ENCODE measurements at regions of chr12 and their contacts with region 1.

Region 1: DNA sequence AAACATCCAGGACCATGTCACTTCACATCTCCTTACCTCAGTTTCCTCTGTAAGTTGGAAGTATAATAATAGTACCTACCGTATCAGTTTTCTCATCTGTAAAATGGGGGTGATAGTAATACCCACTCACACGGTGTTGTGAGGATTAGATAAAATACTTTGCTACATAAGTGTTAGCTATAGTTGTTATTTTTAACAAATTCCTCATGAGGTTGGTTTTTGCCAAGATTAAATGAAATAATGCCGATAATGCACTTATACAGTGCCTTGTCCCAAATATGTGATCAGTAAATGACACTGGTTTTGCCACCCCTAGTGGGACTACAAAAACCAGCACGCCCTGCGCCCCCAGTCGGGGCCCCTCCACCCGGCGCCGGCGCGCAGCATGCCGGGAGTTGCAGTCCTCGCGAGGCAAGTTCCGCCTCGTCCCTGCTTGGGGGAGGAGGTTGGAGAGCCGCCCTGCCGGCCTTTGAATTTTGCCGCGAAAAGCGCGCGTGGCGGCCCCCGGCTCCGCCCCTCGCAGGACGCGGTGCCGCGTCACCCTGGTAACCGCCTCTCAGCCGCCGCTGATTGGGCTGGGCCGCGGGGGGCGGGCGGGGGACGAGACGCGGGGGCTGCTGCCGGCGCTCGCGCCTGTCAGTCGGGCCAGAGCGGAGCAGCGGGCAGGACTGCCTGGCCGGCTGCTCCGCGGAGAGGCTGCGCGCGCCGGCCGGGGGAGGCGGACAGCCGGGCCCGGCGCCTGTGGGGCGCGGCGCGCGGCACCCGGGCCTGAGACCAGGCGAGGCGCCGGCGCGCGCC is at the start of gene FAM222A:
- DNase-seq: peak; percentile 96 to 100 (median 98)
- H3K4me3 ChIP-seq: peak within 1 kb of the TSS; percentile 54 to 89 (median 78)
- H3K27ac ChIP-seq: peak within 1 kb of the TSS in 57 of 59 donors; percentile 41 to 97 (median 86)
- H3K27me3 ChIP-seq: peaks cover 0 to 12% (median 0%) of the 10 kb centered on the region in 45 donors
- CTCF ChIP-seq: peak in 53 of 56 donors; percentile 33 to 75 (median 57)
- total RNA-seq, gene FAM222A: 10.4 to 85.9 (median 23.1) TPM

Region 2: GRCh38 chr12:109518820-109519665 is 194.3 kb before region 1 on chr12:
- intact Hi-C with region 1: loop called (anchors 5 kb)
- DNase-seq: peak in 9 of 10 donors; percentile 52 to 93 (median 75)
- H3K4me3 ChIP-seq: no peak overlapping the region
- H3K27ac ChIP-seq: peak overlapping the region in 54 of 59 donors; percentile 2 to 85 (median 65)
- H3K27me3 ChIP-seq: no peaks in the 10 kb centered on the region
- CTCF ChIP-seq: peak; percentile 76 to 95 (median 86)

Region 3: GRCh38 chr12:109597795-109598427 is 115.5 kb before region 1 on chr12:
- intact Hi-C with region 1: loop called (anchors 2 kb)
- DNase-seq: peak; percentile 90 to 92 (median 91)
- H3K4me3 ChIP-seq: peak overlapping the region in 15 of 59 donors; percentile 2 to 37 (median 19)
- H3K27ac ChIP-seq: peak overlapping the region in 58 of 59 donors; percentile 7 to 91 (median 85)
- H3K27me3 ChIP-seq: no peaks in the 10 kb centered on the region
- CTCF ChIP-seq: peak; percentile 89 to 99 (median 97)

Region 4: DNA sequence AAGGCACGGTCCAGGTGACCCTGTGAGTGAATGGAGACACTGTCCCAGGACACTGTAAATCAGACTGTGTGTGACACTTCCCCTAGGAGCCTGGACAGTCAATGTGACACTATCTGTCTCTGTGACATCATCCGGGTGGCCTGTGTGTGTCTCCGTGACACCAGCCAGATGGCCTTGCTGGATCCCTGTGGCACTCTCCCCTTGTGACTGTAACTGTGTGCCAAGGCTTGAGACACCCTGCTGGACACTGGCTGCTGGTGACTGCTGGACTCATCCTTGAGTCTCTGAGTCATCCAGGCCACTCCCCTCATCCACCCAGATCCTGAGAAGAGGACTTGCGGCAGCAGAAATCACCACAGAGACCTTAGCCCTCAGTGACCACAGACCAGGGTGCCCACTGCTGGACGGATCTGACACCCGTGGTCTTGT is 88.2 kb before region 1 on chr12:
- intact Hi-C with region 1: loop called (anchors 2 to 5 kb)
- DNase-seq: peak; percentile 70 to 97 (median 91)
- H3K4me3 ChIP-seq: peak overlapping the region in 3 of 59 donors; percentile 7 to 26 (median 14)
- H3K27ac ChIP-seq: peak overlapping the region in 58 of 59 donors; percentile 81 to 99 (median 95)
- H3K27me3 ChIP-seq: peaks cover 0 to 4% (median 0%) of the 10 kb centered on the region in 45 donors
- CTCF ChIP-seq: peak in 30 of 56 donors; percentile 10 to 50 (median 32)

Region 5: DNA sequence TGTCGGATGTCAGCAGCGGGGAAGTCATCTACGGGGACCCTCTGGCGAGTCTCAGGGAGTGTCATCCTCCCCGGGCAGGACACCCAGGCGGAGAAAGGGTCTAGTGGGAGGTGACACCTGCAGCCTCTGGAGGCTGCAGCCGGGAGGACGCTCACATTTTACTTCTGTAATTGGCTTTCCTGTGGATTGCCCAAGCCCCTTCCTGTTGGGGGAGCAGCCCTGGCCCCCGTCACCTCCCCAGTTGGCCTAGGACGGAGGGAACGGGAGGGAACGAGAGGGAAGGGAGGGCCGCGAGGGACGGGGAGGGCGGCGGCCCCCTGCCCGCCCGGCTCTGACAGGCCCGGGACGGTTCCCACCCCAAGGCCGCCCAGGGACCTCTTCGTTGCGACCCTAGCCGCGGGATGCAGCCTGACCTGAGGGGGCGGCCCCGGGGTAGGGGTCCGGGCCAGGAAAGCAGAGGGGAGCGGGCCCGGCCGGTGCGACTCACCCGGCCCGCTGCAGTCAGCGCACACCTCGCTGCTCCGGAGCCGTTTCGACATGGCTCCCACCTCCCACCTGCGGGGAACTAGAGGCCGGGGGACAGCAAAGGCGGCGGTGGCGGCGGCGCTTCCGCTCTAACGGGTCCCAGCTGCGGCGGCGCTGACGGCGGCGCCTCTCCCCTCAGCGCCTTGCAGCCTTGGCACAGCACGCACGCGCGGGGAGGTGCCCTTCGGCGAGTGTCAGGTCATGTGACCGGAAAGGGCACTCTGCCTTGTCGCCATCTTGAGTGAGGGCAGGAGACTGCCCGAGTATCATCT is 282.5 kb after region 1 on chr12 and contains the start of gene GIT2:
- intact Hi-C with region 1: loop called in 1 of 2 experiments (anchors 10 kb)
- DNase-seq: peak; percentile 90 to 96 (median 95)
- H3K4me3 ChIP-seq: peak within 1 kb of the TSS; percentile 68 to 100 (median 98)
- H3K27ac ChIP-seq: peak within 1 kb of the TSS in 58 of 59 donors; percentile 4 to 95 (median 81)
- H3K27me3 ChIP-seq: no peaks in the 10 kb centered on the region
- CTCF ChIP-seq: peak in 49 of 56 donors; percentile 13 to 68 (median 39)
- total RNA-seq, gene GIT2: 54.2 to 101 (median 79.0) TPM